Mammary epithelial cell (primary cell): ENCODE measurements at regions of chr3 and their contacts with region 1.

Region 1: DNA sequence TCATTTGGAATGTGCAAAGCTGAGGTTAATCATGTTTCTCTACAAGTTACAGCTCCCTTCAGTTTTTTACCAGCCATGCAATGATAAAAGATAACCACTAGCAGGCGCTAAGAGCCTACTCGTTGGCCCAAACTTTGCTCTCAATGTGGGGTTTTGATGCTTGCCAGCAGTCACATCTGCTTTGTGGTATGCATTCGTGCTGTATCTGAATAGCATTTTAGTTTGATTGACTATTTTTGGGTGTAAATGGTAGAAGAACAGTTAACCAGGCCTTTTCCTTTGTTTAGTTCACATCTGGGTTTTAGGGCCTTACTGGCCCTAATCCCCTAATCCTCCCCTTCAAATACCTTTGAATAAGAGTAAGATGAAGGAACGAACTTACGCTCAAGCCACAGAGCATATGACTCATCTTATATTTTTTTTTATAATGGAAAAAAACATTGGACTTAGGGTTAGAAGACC is 4.4 kb upstream of the CLDN11 start:
- DNase-seq: peak; percentile 68
- H3K4me3 ChIP-seq: no peak overlapping the region
- H3K27ac ChIP-seq: no peak overlapping the region
- H3K4me1 ChIP-seq: peaks cover 11% of the 10 kb centered on the region
- H3K27me3 ChIP-seq: peaks cover 3% of the 10 kb centered on the region
- CTCF ChIP-seq: peak; percentile 100

Region 2: DNA sequence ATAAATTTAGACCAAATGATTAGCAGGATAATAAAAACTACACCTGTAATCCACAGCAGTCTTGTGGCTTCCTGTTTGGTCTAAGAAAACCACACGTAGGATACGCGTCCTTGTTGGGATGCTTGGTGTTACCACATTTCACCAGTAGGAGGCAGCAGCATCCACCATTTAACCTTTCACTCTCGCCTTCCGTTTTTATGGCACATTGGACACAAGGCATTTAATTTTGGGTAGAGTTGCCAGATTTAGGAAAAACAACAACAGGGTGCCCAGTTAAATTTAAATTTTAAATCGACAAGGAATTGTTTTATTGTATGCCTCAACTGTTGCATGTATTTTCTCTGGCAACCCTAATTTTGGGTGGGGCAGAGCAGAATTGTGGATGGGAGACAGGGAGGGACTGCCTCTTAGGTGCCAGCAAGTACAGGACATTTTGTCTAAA is 550.8 kb before region 1 on chr3:
- CTCF ChIA-PET with region 1: no interaction called
- dilution Hi-C with region 1: no loop called
- in situ Hi-C with region 1: no loop called
- intact Hi-C with region 1: loop called (anchors 2 kb)
- DNase-seq: peak; percentile 71
- H3K4me3 ChIP-seq: no peak overlapping the region
- H3K27ac ChIP-seq: no peak overlapping the region
- H3K4me1 ChIP-seq: no peaks in the 10 kb centered on the region
- H3K27me3 ChIP-seq: peaks cover 2% of the 10 kb centered on the region
- CTCF ChIP-seq: peak; percentile 93 to 95

Region 3: DNA sequence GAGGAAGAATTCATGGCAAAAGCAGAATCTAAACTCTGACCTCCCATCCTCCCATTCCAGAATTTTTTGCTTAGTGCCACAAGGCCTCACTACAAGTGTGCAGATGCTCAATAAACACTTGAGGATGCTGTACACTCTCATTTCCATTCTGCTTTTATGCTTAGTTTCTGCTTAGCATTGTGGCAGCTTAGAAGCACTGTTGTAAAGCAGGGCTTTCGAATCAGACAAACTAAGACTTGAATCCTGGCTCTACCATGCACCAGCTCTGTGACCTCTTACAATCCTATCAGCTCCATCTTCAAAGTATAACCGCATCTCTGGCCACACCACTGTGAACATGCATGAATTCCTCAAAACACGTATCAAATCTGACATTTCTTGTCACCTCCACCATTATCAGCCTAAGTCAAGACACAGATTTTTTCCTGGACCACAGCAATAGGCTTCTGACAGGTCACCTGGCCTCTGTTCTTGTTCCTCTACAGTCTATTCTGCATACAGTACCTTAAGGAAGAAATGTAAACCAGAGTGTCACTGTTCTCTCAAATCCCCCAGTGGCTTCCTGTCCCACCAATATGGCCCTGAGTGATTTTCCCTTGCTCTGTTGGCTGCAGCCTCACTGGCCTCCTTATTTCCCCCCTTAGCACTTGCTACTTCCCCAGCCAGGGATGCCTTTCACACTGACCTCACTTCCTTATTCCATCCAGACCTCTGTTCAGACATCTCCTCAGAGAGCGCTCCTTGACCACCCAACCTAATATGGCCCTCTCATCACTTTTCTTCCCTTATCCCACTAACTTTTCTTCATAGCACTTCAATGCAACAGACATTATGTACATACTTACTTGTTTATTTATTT is 224.6 kb before region 1 on chr3:
- CTCF ChIA-PET with region 1: no interaction called
- dilution Hi-C with region 1: no loop called
- in situ Hi-C with region 1: no loop called
- intact Hi-C with region 1: loop called (anchors 2 kb)
- DNase-seq: no peak
- H3K4me3 ChIP-seq: no peak overlapping the region
- H3K27ac ChIP-seq: no peak overlapping the region
- H3K4me1 ChIP-seq: no peaks in the 10 kb centered on the region
- H3K27me3 ChIP-seq: no peaks in the 10 kb centered on the region
- CTCF ChIP-seq: no peak

Region 4: GRCh38 chr3:170470063-170471016 is 56.1 kb after region 1 on chr3:
- CTCF ChIA-PET with region 1: no interaction called
- dilution Hi-C with region 1: no loop called
- in situ Hi-C with region 1: no loop called
- intact Hi-C with region 1: no loop called
- DNase-seq: no peak
- H3K4me3 ChIP-seq: no peak overlapping the region
- H3K27ac ChIP-seq: no peak overlapping the region
- H3K4me1 ChIP-seq: no peaks in the 10 kb centered on the region
- H3K27me3 ChIP-seq: no peaks in the 10 kb centered on the region
- CTCF ChIP-seq: no peak

Region 5: GRCh38 chr3:170499565-170500156 is 85.4 kb after region 1 on chr3:
- CTCF ChIA-PET with region 1: interaction called, 9 read pairs
- dilution Hi-C with region 1: no loop called
- in situ Hi-C with region 1: no loop called
- intact Hi-C with region 1: loop called (anchors 1 kb)
- DNase-seq: peak; percentile 41
- H3K4me3 ChIP-seq: no peak overlapping the region
- H3K27ac ChIP-seq: no peak overlapping the region
- H3K4me1 ChIP-seq: peaks cover 8% of the 10 kb centered on the region
- H3K27me3 ChIP-seq: no peaks in the 10 kb centered on the region
- CTCF ChIP-seq: peak; percentile 60 to 80

Region 6: GRCh38 chr3:170689893-170690660 is 275.8 kb after region 1 on chr3:
- CTCF ChIA-PET with region 1: interaction called, 3 read pairs
- dilution Hi-C with region 1: no loop called
- in situ Hi-C with region 1: no loop called
- intact Hi-C with region 1: loop called (anchors 1 kb)
- DNase-seq: no peak
- H3K4me3 ChIP-seq: no peak overlapping the region
- H3K27ac ChIP-seq: peak overlapping the region; percentile 92
- H3K4me1 ChIP-seq: peaks cover 36% of the 10 kb centered on the region
- H3K27me3 ChIP-seq: no peaks in the 10 kb centered on the region
- CTCF ChIP-seq: peak; percentile 56 to 63

Region 7: GRCh38 chr3:170751083-170751898 is 337.1 kb after region 1 on chr3:
- CTCF ChIA-PET with region 1: interaction called, 3 read pairs
- dilution Hi-C with region 1: no loop called
- in situ Hi-C with region 1: no loop called
- intact Hi-C with region 1: loop called (anchors 5 kb)
- DNase-seq: peak; percentile 90
- H3K4me3 ChIP-seq: no peak overlapping the region
- H3K27ac ChIP-seq: peak overlapping the region; percentile 67
- H3K4me1 ChIP-seq: peaks cover 47% of the 10 kb centered on the region
- H3K27me3 ChIP-seq: no peaks in the 10 kb centered on the region
- CTCF ChIP-seq: no peak